OCI-LY7 (cell line): ENCODE measurements at regions of chr4 and their contacts with region 1.

Region 1: GRCh38 chr4:102826890-102827673 is at the start of gene UBE2D3:
- DNase-seq: peak; percentile 93
- H3K4me3 ChIP-seq: peak within 1 kb of the TSS; percentile 89
- H3K27ac ChIP-seq: peak within 1 kb of the TSS; percentile 94
- H3K4me1 ChIP-seq: peaks cover 41% of the 10 kb centered on the region
- CTCF ChIP-seq: peak; percentile 32; the same call in 1 of the 2 replicates
- total RNA-seq, gene UBE2D3: 363 and 374 TPM in 2 replicates

Region 2: GRCh38 chr4:102344954-102345794 is 481.9 kb before region 1 on chr4 and contains the start of gene SLC39A8:
- CTCF ChIA-PET with region 1: no interaction called
- POLR2A ChIA-PET with region 1: no interaction called
- intact Hi-C with region 1: loop called (anchors 1 kb)
- DNase-seq: peak; percentile 93
- H3K4me3 ChIP-seq: peak within 1 kb of the TSS; percentile 78
- H3K27ac ChIP-seq: peak within 1 kb of the TSS; percentile 94
- H3K4me1 ChIP-seq: peaks cover 42% of the 10 kb centered on the region
- CTCF ChIP-seq: peak; percentile 84
- total RNA-seq, gene SLC39A8: 29.2 and 35.4 TPM in 2 replicates

Region 3: DNA sequence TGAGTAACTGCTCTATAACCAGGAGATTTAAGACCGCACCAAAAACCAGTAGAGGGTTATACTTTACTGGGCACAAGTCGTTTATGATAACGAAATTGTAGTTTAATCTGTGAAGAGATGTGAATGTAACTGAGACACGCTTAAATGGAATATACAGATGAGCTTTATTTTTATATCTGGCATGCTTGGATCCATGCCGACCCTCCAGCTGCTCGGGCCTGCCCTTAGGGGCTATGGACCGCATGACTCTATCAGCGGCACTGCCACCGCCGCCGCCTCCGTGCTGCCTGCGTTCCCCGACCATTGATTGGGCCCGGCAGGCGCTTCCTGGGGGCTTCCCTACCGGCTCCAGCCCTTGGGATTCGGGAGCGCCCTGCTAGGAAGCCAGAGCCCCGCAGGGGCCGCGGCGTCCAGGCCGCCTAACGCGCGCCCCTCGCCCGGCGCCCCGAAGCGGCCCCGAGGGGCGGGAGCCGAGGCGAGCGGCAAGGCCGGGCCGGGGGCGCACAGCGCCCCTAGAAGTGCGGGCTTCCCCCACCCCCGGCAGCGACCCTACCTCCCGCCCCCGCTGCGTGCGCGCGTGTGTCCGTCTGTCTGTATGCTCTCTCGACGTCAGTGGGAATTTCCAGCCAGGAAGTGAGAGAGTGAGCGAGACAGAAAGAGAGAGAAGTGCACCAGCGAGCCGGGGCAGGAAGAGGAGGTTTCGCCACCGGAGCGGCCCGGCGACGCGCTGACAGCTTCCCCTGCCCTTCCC is 326.2 kb before region 1 on chr4 and contains the start of gene NFKB1:
- CTCF ChIA-PET with region 1: no interaction called
- POLR2A ChIA-PET with region 1: interaction called, 4 read pairs
- intact Hi-C with region 1: loop called (anchors 5 kb)
- DNase-seq: peak; percentile 78
- H3K4me3 ChIP-seq: peak within 1 kb of the TSS; percentile 97
- H3K27ac ChIP-seq: peak within 1 kb of the TSS; percentile 77
- H3K4me1 ChIP-seq: peaks cover 26% of the 10 kb centered on the region
- CTCF ChIP-seq: no peak
- total RNA-seq, gene NFKB1: 20.7 and 23.1 TPM in 2 replicates

Region 4: DNA sequence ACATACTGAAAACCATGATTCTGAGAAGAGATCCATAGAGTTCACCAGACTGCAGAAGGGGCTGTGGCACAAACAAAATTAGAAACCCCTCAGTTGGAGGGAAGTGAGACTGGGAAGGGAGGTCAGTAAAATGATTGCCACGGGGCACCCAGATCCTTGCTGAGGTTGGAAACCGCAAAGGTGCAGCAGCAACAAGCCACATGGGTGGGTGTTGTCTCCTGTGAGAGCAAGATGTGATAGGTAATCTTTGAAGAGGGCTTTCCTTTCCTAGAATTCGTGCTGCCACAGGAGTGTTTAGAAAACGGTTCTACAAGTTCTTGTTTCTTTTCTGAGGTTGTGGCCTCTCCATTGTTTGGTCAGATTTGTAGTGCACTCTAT is 240.4 kb before region 1 on chr4:
- CTCF ChIA-PET with region 1: no interaction called
- POLR2A ChIA-PET with region 1: no interaction called
- intact Hi-C with region 1: no loop called
- DNase-seq: no peak
- H3K4me3 ChIP-seq: no peak overlapping the region
- H3K27ac ChIP-seq: no peak overlapping the region
- H3K4me1 ChIP-seq: no peaks in the 10 kb centered on the region
- CTCF ChIP-seq: no peak

Region 5: DNA sequence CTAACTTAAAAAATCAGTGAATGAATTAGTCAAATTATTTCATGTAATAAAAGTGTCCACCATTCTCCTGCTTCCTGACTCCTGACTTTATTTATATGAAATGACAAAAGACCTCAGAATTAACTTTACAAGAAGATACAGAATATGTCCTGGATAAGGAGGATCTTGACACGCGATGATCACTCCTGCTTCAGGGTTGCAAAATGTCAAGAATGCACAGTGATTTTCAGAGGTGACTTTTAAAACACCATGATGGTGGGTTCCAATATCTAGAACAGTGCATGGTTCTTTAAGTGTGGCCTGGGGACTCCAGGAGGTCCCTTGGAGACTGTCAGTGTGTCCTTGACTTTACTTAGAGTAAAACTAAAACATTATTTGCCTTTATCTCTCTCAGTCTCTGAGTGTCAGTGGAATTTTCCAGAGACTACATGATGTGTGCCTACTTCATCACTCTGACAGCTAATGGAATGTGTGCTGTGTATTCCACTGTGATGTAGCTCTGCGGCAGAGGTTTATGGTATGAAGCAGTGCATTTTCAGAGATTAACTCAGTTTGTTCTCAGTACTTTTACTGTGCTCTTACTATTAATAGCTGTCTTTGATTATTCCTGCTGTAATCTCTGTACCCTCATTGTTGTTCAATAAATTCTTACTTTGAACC is 152.1 kb before region 1 on chr4:
- CTCF ChIA-PET with region 1: no interaction called
- POLR2A ChIA-PET with region 1: no interaction called
- intact Hi-C with region 1: no loop called
- DNase-seq: no peak
- H3K4me3 ChIP-seq: no peak overlapping the region
- H3K27ac ChIP-seq: no peak overlapping the region
- H3K4me1 ChIP-seq: no peaks in the 10 kb centered on the region
- CTCF ChIP-seq: no peak

Region 6: GRCh38 chr4:102809190-102809589 is 17.9 kb before region 1 on chr4:
- CTCF ChIA-PET with region 1: interaction called, 3 read pairs
- POLR2A ChIA-PET with region 1: interaction called, 63 read pairs
- intact Hi-C with region 1: no loop called
- DNase-seq: peak; percentile 34
- H3K4me3 ChIP-seq: no peak overlapping the region
- H3K27ac ChIP-seq: no peak overlapping the region
- H3K4me1 ChIP-seq: peaks cover 31% of the 10 kb centered on the region
- CTCF ChIP-seq: no peak

Region 7: DNA sequence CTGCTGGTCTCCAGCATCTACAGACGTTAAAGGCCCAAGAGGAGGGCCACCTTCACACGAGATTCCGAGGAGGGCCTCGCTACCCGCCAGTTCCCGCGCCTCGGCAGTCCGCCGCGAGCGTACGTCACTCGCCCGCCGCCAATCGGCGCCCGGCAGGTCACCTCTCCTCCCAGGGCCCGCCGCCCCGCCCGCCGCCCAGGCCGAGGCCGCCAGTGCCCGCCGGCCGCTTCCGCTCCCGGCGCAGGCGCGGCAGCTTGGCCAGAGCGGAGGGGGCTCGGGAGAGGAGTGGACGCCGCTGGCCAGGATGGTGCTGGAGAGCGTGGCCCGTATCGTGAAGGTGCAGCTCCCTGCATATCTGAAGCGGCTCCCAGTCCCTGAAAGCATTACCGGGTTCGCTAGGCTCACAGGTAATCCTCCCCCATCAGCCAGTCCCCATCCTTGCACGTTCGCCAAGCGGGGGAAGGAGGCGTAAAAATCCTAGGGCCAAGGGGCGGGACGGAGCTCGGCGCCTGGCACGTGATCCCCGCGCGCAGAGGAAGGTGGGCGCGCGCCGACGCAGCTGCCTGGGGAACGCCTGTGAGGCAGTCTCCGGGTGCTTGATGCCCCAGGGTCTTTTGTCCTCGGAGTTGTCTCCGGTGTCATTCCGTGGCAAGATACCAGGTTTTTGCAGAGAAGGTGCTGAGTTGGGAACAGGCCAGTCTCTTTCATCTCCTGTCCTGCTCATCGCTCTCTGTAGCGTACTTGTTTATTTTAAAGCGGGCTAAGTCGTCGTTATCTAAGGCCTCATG is 41.9 kb after region 1 on chr4 and contains the start of gene CISD2:
- CTCF ChIA-PET with region 1: interaction called, 7 read pairs
- POLR2A ChIA-PET with region 1: interaction called, 116 read pairs
- intact Hi-C with region 1: loop called (anchors 1 kb)
- DNase-seq: peak; percentile 94
- H3K4me3 ChIP-seq: peak within 1 kb of the TSS; percentile 74
- H3K27ac ChIP-seq: peak within 1 kb of the TSS; percentile 94
- H3K4me1 ChIP-seq: peaks cover 42% of the 10 kb centered on the region
- CTCF ChIP-seq: no peak
- total RNA-seq, gene CISD2: 37.6 and 41.1 TPM in 2 replicates

Region 8: GRCh38 chr4:103075901-103076739 is 249.0 kb after region 1 on chr4:
- CTCF ChIA-PET with region 1: no interaction called
- POLR2A ChIA-PET with region 1: interaction called, 4 read pairs
- intact Hi-C with region 1: loop called (anchors 1 kb)
- DNase-seq: peak; percentile 79
- H3K4me3 ChIP-seq: peak overlapping the region; percentile 79
- H3K27ac ChIP-seq: peak overlapping the region; percentile 86
- H3K4me1 ChIP-seq: peaks cover 51% of the 10 kb centered on the region
- CTCF ChIP-seq: peak; percentile 39; the same call in 1 of the 2 replicates